Gastrocnemius medialis (tissue), 4 donors: ENCODE measurements at regions of chr12 and their contacts with region 1.

Region 1: GRCh38 chr12:54379401-54380201 is 4.9 kb downstream of the ZNF385A start:
- DNase-seq: peak; percentile 86 to 90
- ATAC-seq: peak; percentile 81 to 91
- H3K4me3 ChIP-seq: peak overlapping the region; percentile 44 to 78 (median 51)
- H3K27ac ChIP-seq: peak overlapping the region; percentile 72 to 80 (median 78)
- H3K4me1 ChIP-seq: peaks cover 30 to 54% of the 10 kb centered on the region in 2 donors
- H3K27me3 ChIP-seq: no peaks in the 10 kb centered on the region
- CTCF ChIP-seq: peak; percentile 98 to 100 (median 100)
- POLR2A ChIP-seq: no peak

Region 2: GRCh38 chr12:53727310-53728041 is 652.1 kb before region 1 on chr12 and contains the start of gene CALCOCO1:
- in situ Hi-C with region 1: no loop called
- intact Hi-C with region 1: loop called (anchors 10 kb)
- DNase-seq: peak; percentile 98 to 99
- ATAC-seq: peak; percentile 96 to 97
- H3K4me3 ChIP-seq: peak within 1 kb of the TSS; percentile 69 to 93 (median 82)
- H3K27ac ChIP-seq: peak within 1 kb of the TSS; percentile 87 to 98 (median 93)
- H3K4me1 ChIP-seq: peaks cover 18% of the 10 kb centered on the region in 2 donors
- H3K27me3 ChIP-seq: no peaks in the 10 kb centered on the region
- CTCF ChIP-seq: no peak
- POLR2A ChIP-seq: peak; percentile 70 to 91
- total RNA-seq, gene CALCOCO1: 158 to 385 (median 239) TPM